Natural killer cell (primary cell): ENCODE measurements at regions of chr6 and their contacts with region 1.

Region 1: GRCh38 chr6:130262008-130262407 is 39.3 kb upstream of the SAMD3 start:
- DNase-seq: no peak
- ATAC-seq: no peak
- H3K4me3 ChIP-seq: no peak overlapping the region
- H3K4me3 Mint-ChIP-seq: peak overlapping the region; percentile 92
- H3K27ac ChIP-seq: peak overlapping the region; percentile 79
- H3K27ac Mint-ChIP-seq: peak overlapping the region; percentile 87 to 88
- H3K4me1 ChIP-seq: peaks cover 18% of the 10 kb centered on the region
- H3K4me1 Mint-ChIP-seq: peaks cover 35 to 39% of the 10 kb centered on the region in 2 donors
- H3K27me3 ChIP-seq: no peaks in the 10 kb centered on the region
- H3K27me3 Mint-ChIP-seq: no peaks in the 10 kb centered on the region
- CTCF ChIP-seq: no peak

Region 2: GRCh38 chr6:129882510-129883023 is 379.4 kb before region 1 on chr6:
- intact Hi-C with region 1: no loop called
- DNase-seq: peak in 1 of 2 donors; percentile 10
- ATAC-seq: no peak
- H3K4me3 ChIP-seq: no peak overlapping the region
- H3K4me3 Mint-ChIP-seq: no peak overlapping the region
- H3K27ac ChIP-seq: no peak overlapping the region
- H3K27ac Mint-ChIP-seq: no peak overlapping the region
- H3K4me1 ChIP-seq: no peaks in the 10 kb centered on the region
- H3K4me1 Mint-ChIP-seq: peaks cover 0 to 6% of the 10 kb centered on the region in 2 donors
- H3K27me3 ChIP-seq: no peaks in the 10 kb centered on the region
- H3K27me3 Mint-ChIP-seq: peaks cover 25 to 31% of the 10 kb centered on the region in 2 donors
- CTCF ChIP-seq: no peak

Region 3: DNA sequence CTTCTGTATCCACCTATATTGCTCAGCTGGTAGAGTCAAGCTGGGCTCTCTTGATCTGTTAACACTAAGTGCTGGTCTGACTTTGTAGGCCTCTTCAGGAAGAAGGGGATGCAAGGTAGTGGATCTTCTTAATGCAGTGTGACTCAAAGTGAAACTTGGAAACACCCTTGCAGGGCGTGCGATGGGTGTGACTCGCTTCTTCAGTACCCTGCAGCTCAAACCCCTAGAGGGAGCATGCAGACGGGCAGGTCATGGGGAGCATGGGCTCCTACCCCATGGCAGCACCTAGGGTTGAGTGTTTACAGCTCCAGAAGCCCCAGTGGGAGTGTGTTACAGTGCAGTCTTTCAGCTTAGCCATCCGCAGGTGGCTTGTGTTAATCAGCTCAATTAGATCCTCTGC is 38.5 kb before region 1 on chr6:
- intact Hi-C with region 1: loop called (anchors 5 kb)
- DNase-seq: peak; percentile 48 to 86
- ATAC-seq: peak; percentile 84 to 88 (median 88)
- H3K4me3 ChIP-seq: no peak overlapping the region
- H3K4me3 Mint-ChIP-seq: peak overlapping the region; percentile 94
- H3K27ac ChIP-seq: peak overlapping the region; percentile 61
- H3K27ac Mint-ChIP-seq: peak overlapping the region; percentile 91 to 93
- H3K4me1 ChIP-seq: peaks cover 26% of the 10 kb centered on the region
- H3K4me1 Mint-ChIP-seq: peaks cover 26 to 40% of the 10 kb centered on the region in 2 donors
- H3K27me3 ChIP-seq: no peaks in the 10 kb centered on the region
- H3K27me3 Mint-ChIP-seq: no peaks in the 10 kb centered on the region
- CTCF ChIP-seq: peak; percentile 33